PC-9 (cell line): ENCODE measurements at regions of chr19 and their contacts with region 1.

Region 1: DNA sequence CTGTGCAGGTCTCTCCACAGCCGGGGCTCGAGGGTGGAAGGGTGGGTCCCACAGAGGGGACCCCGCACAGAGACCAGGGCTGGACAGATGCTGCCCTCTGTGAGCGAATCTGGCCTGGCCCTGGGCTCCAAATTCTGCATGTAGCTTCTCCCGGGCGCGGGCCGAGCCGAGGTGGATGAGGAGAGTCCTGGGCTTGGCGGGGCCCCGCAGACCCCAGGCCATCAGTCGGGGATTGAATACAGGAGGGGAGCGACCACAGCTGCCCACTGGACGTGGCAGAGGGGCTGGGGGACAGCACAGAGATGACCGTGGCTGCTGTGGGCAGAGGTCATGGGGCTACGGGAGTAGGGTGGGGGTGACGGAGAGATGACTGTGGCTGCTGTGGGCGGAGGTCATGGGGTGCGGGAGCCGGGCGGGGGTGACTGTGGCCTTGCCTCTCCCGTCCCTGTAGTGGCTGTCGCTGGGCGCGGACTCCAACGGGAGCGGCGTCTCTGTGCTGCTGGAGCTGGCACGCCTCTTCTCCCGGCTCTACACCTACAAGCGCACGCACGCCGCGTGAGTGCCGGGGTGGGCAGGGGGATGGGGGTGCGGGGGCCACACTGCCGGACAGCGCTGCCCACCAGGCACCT is 15.5 kb downstream of the NCLN start:
- DNase-seq: no peak
- H3K4me3 ChIP-seq: no peak overlapping the region
- H3K27ac ChIP-seq: no peak overlapping the region
- H3K4me1 ChIP-seq: no peaks in the 10 kb centered on the region
- H3K27me3 ChIP-seq: no peaks in the 10 kb centered on the region
- CTCF ChIP-seq: no peak

Region 2: DNA sequence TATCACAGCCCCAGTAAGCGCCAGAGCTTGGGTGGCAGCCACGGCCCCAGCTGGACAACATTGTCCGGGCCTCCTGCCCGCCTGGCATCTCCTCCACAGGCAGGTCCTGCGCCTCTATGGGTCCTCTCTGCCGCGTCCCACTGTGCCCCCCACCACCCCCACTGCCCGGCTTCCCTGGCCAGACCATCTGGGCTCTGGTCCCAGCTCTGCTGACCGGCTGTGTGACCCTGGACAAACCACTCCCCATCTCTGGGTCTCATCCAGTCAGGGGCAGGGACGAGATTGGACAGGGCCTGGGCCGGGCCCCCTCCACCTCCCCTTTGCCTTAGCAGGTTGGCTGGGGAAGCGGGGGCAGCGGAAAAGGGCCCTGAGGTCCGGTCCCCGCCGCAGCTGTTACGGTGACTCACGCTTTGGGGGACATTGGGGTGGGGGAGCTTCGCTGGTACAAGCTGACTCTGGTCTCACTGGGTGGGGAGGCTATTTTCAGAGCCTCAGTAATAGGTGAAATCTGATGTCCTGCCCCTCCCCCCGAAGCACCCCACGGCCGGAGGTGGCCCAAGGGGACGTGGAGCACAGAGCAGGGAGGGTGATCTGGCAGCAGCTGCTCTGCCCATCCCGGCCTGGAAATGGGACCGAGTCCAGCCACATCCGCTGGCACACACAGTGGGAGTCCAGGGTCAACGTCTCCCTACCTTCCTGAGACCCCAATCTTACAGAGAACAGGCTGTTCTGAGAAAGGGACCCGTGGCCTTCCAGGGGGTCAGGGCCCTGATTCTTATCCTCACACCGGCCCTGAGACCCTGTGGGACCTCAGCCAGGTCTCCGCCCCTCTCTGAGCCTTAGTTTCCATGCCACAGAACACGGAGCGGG is 174.3 kb after region 1 on chr19:
- CTCF ChIA-PET with region 1: interaction called, 15 read pairs
- POLR2A ChIA-PET with region 1: no interaction called
- intact Hi-C with region 1: no loop called
- DNase-seq: no peak
- H3K4me3 ChIP-seq: no peak overlapping the region
- H3K27ac ChIP-seq: no peak overlapping the region
- H3K4me1 ChIP-seq: no peaks in the 10 kb centered on the region
- H3K27me3 ChIP-seq: no peaks in the 10 kb centered on the region
- CTCF ChIP-seq: no peak